Aorta (tissue), 5 donors: ENCODE measurements at regions of chr15 and their contacts with region 1.

Region 1: DNA sequence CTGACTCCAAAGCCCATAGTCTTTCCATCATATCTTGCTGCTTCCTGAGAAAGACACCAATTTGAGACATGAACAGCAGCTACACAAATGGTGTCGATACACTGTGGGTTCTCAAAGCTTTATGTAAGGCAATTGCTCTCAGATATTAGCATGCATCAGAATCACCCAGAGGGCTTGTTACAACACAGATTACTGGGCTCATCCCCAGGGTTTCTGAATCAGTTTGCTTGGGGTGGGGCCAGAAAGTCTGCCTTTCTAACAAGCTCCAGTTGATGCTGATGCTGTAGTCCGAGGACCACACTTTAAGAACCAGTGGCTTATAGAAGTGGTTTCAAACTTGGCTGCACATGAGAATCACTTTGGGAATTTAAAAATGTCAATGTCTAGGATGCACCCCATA is 86.5 kb downstream of the SEMA6D start:
- DNase-seq: no peak
- ATAC-seq: no peak
- H3K4me3 ChIP-seq: no peak overlapping the region
- H3K27ac ChIP-seq: no peak overlapping the region
- H3K4me1 ChIP-seq: no peaks in the 10 kb centered on the region
- H3K27me3 ChIP-seq: no peaks in the 10 kb centered on the region

Region 2: GRCh38 chr15:47756872-47757271 is 46.9 kb before region 1 on chr15:
- intact Hi-C with region 1: no loop called
- DNase-seq: peak in 1 of 2 donors; percentile 60
- ATAC-seq: peak; percentile 63
- H3K4me3 ChIP-seq: no peak overlapping the region
- H3K27ac ChIP-seq: no peak overlapping the region
- H3K4me1 ChIP-seq: no peaks in the 10 kb centered on the region
- H3K27me3 ChIP-seq: no peaks in the 10 kb centered on the region

Region 3: GRCh38 chr15:47932951-47933641 is 129.3 kb after region 1 on chr15:
- intact Hi-C with region 1: loop called in 1 of 2 experiments (anchors 10 kb)
- DNase-seq: no peak
- ATAC-seq: no peak
- H3K4me3 ChIP-seq: no peak overlapping the region
- H3K27ac ChIP-seq: no peak overlapping the region
- H3K4me1 ChIP-seq: no peaks in the 10 kb centered on the region
- H3K27me3 ChIP-seq: no peaks in the 10 kb centered on the region